Uterus (tissue), 4 donors: ENCODE measurements at regions of chr6 and their contacts with region 1.

Region 1: DNA sequence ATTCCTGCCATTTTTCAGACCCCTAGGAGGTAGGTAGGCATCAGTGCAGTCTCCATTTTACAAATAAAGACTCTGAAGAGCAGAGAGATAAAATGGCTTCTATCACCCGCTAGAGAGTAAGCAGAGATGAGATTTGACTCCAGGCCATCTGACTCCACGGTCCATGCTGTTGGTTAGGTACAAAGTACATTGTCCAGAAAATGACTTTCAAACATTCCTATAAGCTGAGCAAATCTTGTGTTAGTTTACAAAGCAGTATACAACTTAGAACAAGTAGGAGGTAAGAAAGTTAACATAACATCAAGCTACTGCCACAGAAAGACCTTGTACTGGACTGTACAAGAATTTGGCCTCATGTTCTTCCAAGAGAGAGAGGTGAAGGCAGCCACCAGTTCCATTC is 14.9 kb downstream of the BTN1A1 start:
- DNase-seq: no peak
- H3K4me3 ChIP-seq: no peak overlapping the region
- H3K27ac ChIP-seq: no peak overlapping the region
- H3K4me1 ChIP-seq: no peaks in the 10 kb centered on the region
- H3K27me3 ChIP-seq: no peaks in the 10 kb centered on the region
- CTCF ChIP-seq: no peak
- POLR2A ChIP-seq: no peak

Region 2: GRCh38 chr6:26141378-26141904 is 373.5 kb before region 1 on chr6:
- intact Hi-C with region 1: no loop called
- DNase-seq: no peak
- H3K4me3 ChIP-seq: no peak overlapping the region
- H3K27ac ChIP-seq: no peak overlapping the region
- H3K4me1 ChIP-seq: no peaks in the 10 kb centered on the region
- H3K27me3 ChIP-seq: no peaks in the 10 kb centered on the region
- CTCF ChIP-seq: no peak
- POLR2A ChIP-seq: no peak

Region 3: GRCh38 chr6:26285143-26286134 is 229.5 kb before region 1 on chr6:
- intact Hi-C with region 1: no loop called
- DNase-seq: peak; percentile 95 to 99
- H3K4me3 ChIP-seq: peak overlapping the region; percentile 53 to 89
- H3K27ac ChIP-seq: peak overlapping the region; percentile 91 to 94
- H3K4me1 ChIP-seq: no peaks in the 10 kb centered on the region
- H3K27me3 ChIP-seq: no peaks in the 10 kb centered on the region
- CTCF ChIP-seq: no peak
- POLR2A ChIP-seq: peak in 1 of 2 donors; percentile 86

Region 4: GRCh38 chr6:26304797-26305640 is 210.0 kb before region 1 on chr6:
- intact Hi-C with region 1: no loop called
- DNase-seq: peak; percentile 69 to 81
- H3K4me3 ChIP-seq: peak overlapping the region; percentile 34 to 53
- H3K27ac ChIP-seq: peak overlapping the region; percentile 58 to 82
- H3K4me1 ChIP-seq: no peaks in the 10 kb centered on the region
- H3K27me3 ChIP-seq: no peaks in the 10 kb centered on the region
- CTCF ChIP-seq: no peak
- POLR2A ChIP-seq: no peak

Region 5: DNA sequence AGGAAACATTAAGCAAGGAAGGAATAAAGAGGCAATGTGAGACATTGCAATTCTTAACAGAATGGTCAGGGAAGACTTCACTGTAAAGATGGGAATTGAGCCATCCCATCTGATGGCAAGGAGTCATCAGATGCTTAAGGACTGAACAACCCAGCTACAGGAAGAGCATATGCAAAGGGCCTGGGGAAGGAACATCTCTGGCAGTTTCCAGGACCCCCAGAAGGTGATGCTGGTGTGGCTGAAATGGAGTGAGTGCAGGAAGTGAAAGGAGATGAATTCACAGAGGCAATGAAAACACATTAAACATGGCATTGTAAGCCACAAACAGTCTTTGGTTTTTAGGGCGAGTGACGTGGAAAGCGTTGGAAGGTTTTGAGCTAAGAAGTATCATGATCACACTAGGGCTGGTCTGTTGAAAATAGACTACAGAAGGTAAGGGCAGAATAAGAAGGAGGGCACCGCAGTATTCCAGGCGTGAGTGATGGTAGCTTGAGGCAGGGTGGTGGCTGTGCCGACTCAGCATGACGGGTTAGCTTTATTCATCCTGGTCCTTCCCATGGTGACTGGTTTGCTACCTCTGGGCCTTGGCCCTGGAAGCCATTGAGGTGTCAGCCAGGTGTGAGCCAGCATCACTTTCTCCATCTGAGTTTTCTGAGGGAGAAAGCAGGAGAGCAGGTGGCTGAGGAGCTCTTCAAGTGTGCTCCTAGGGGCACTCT is 50.4 kb before region 1 on chr6:
- intact Hi-C with region 1: loop called (anchors 10 kb)
- DNase-seq: no peak
- H3K4me3 ChIP-seq: no peak overlapping the region
- H3K27ac ChIP-seq: no peak overlapping the region
- H3K4me1 ChIP-seq: peaks cover 7 to 12% of the 10 kb centered on the region in 2 donors
- H3K27me3 ChIP-seq: no peaks in the 10 kb centered on the region
- CTCF ChIP-seq: no peak
- POLR2A ChIP-seq: no peak